HepG2 (cell line): ENCODE measurements at regions of chr9 and their contacts with region 1.

Region 1: GRCh38 chr9:115764645-115765044 is 388.9 kb upstream of the PAPPA start:
- DNase-seq: no peak
- ATAC-seq: no peak
- H3K4me3 ChIP-seq: no peak overlapping the region
- H3K27ac ChIP-seq: no peak overlapping the region
- H3K4me1 ChIP-seq: no peaks in the 10 kb centered on the region
- H3K27me3 ChIP-seq: no peaks in the 10 kb centered on the region
- CTCF ChIP-seq: no peak
- EP300 ChIP-seq: no peak
- POLR2A ChIP-seq: no peak
- RAD21 ChIP-seq: no peak

Region 2: GRCh38 chr9:115400796-115401195 is 363.8 kb before region 1 on chr9:
- CTCF ChIA-PET with region 1: no interaction called
- POLR2A ChIA-PET with region 1: no interaction called
- in situ Hi-C with region 1: no loop called
- intact Hi-C with region 1: no loop called
- DNase-seq: no peak
- ATAC-seq: no peak
- H3K4me3 ChIP-seq: no peak overlapping the region
- H3K27ac ChIP-seq: no peak overlapping the region
- H3K4me1 ChIP-seq: no peaks in the 10 kb centered on the region
- H3K27me3 ChIP-seq: no peaks in the 10 kb centered on the region
- CTCF ChIP-seq: no peak
- EP300 ChIP-seq: no peak
- POLR2A ChIP-seq: no peak
- RAD21 ChIP-seq: no peak

Region 3: DNA sequence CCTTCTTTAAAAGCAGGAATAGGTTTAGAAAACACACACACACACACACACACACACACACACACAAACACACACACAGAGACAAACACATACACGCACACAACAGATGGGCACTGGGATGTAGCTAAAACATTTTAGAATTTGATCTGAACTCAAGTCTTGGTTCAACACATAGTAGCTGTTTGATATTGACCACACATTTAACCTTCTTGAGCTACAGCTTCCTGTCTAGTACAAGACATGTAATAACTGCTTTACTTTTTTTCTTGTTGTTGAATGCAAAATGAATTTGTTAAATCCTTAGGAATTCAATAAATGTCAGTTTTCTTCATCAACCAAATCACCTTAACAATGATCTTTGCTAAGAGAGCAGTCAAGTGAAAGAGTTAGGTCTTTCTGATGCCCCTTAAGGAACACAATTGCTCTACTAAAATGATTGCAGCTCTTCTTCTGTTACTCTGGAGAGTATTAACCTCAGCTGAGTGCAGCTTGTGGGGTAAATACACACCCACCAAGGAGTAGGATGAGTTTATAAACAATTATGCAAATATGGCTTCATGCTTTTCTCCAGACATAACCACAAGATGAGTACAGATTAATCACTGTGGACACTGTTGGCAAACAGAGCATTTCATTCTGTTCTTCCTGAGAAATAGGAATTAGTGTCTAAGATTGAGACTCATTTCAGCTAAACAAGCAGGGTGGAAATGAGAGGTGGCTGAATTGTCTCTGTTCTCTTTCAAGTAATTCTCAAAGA is 86.1 kb after region 1 on chr9:
- CTCF ChIA-PET with region 1: no interaction called
- POLR2A ChIA-PET with region 1: no interaction called
- in situ Hi-C with region 1: loop called (anchors 25 kb)
- intact Hi-C with region 1: no loop called
- DNase-seq: no peak
- ATAC-seq: no peak
- H3K4me3 ChIP-seq: no peak overlapping the region
- H3K27ac ChIP-seq: no peak overlapping the region
- H3K4me1 ChIP-seq: no peaks in the 10 kb centered on the region
- H3K27me3 ChIP-seq: no peaks in the 10 kb centered on the region
- CTCF ChIP-seq: no peak
- EP300 ChIP-seq: no peak
- POLR2A ChIP-seq: no peak
- RAD21 ChIP-seq: no peak